Mammary epithelial cell (primary cell): ENCODE measurements at regions of chr3 and their contacts with region 1.

Region 1: GRCh38 chr3:157081681-157082210 is 78.2 kb downstream of the CCNL1 start:
- DNase-seq: peak; percentile 98
- H3K4me3 ChIP-seq: no peak overlapping the region
- H3K27ac ChIP-seq: peak overlapping the region; percentile 97
- H3K4me1 ChIP-seq: peaks cover 41% of the 10 kb centered on the region
- H3K27me3 ChIP-seq: no peaks in the 10 kb centered on the region
- CTCF ChIP-seq: peak; percentile 85 to 99

Region 2: DNA sequence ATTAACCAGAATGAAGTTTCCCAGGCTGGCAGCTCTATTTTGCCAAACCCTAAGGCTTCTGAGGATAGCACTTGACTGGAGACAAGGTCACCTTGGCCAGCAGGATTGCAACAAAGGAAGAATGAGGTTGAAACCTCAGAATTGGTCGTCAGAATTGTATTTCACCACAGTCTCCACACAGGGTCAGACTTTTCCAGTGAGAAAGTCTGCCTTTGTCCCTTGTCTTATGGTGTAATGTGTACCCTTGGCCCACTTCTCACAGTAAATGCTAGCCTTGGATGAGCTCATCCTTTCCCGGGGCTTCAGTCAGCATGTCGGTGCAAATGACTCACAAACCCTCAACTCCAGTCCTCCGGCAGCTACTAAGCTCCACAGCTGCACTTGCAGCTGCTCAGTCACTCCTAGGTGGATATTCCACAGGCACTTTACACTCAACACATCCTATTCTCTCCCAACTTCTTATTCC is 546.6 kb before region 1 on chr3:
- CTCF ChIA-PET with region 1: no interaction called
- dilution Hi-C with region 1: no loop called
- in situ Hi-C with region 1: loop called (anchors 10 to 25 kb)
- intact Hi-C with region 1: loop called (anchors 5 kb)
- DNase-seq: peak; percentile 93
- H3K4me3 ChIP-seq: no peak overlapping the region
- H3K27ac ChIP-seq: peak overlapping the region; percentile 3
- H3K4me1 ChIP-seq: peaks cover 11% of the 10 kb centered on the region
- H3K27me3 ChIP-seq: no peaks in the 10 kb centered on the region
- CTCF ChIP-seq: peak; percentile 10 to 23

Region 3: DNA sequence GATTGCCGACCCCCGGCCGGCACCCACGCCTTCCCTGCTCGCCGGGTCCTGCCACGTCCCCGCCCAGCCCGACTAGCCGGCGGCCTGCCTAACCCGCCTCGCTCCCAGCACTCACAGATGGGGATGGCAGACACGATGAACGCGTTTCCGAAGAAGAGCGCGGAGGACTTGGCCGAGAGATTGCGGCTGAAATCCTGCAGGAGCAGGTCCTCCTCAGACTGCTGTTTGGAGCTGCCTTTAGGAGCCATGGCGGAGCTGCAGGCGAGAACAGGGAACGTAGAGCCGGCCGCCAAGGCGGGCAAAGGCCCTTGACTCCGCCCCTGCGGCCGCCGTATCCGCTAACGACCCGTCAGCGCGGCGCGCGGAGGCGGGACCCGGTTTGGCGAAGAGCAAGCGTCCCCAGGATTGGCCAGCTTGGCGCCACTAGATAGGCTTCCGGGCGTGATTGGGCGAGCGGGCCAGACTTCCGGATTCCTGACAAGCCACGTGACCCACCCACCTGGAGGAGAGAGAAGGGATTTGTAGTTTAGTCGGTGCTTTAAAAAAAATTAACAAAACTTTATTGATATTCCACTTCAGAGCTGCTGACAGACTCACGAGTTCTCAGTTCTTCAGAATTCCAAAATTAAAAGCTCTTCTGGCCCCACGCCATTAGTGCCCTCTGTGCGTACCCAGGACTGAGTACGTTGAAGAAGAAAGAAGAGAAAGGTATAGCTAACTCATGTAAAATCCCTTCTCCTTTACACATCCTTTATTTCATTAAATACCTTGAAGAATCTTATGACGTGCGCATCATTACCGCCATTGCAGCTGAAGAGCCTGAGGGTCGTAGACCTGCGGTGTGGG is 526.7 kb before region 1 on chr3 and contains the start of gene SSR3:
- CTCF ChIA-PET with region 1: no interaction called
- dilution Hi-C with region 1: no loop called
- in situ Hi-C with region 1: no loop called
- intact Hi-C with region 1: loop called (anchors 1 kb)
- DNase-seq: peak; percentile 99
- H3K4me3 ChIP-seq: peak within 1 kb of the TSS; percentile 97 to 99 (median 97)
- H3K27ac ChIP-seq: peak within 1 kb of the TSS; percentile 87
- H3K4me1 ChIP-seq: peaks cover 34% of the 10 kb centered on the region
- H3K27me3 ChIP-seq: no peaks in the 10 kb centered on the region
- CTCF ChIP-seq: peak in 1 of 2 donors; percentile 8
- total RNA-seq, gene SSR3: 375 to 388 TPM

Region 4: GRCh38 chr3:156727519-156728205 is 354.1 kb before region 1 on chr3:
- CTCF ChIA-PET with region 1: no interaction called
- dilution Hi-C with region 1: no loop called
- in situ Hi-C with region 1: no loop called
- intact Hi-C with region 1: loop called (anchors 5 kb)
- DNase-seq: no peak
- H3K4me3 ChIP-seq: no peak overlapping the region
- H3K27ac ChIP-seq: peak overlapping the region; percentile 54
- H3K4me1 ChIP-seq: peaks cover 39% of the 10 kb centered on the region
- H3K27me3 ChIP-seq: no peaks in the 10 kb centered on the region
- CTCF ChIP-seq: no peak

Region 5: GRCh38 chr3:156787926-156788663 is 293.7 kb before region 1 on chr3:
- CTCF ChIA-PET with region 1: no interaction called
- dilution Hi-C with region 1: no loop called
- in situ Hi-C with region 1: no loop called
- intact Hi-C with region 1: loop called (anchors 1 kb)
- DNase-seq: peak; percentile 97
- H3K4me3 ChIP-seq: no peak overlapping the region
- H3K27ac ChIP-seq: peak overlapping the region; percentile 99
- H3K4me1 ChIP-seq: peaks cover 60% of the 10 kb centered on the region
- H3K27me3 ChIP-seq: no peaks in the 10 kb centered on the region
- CTCF ChIP-seq: peak in 1 of 2 donors; percentile 6

Region 6: GRCh38 chr3:156892701-156893100 is 189.0 kb before region 1 on chr3:
- CTCF ChIA-PET with region 1: no interaction called
- dilution Hi-C with region 1: no loop called
- in situ Hi-C with region 1: no loop called
- intact Hi-C with region 1: loop called (anchors 1 kb)
- DNase-seq: peak; percentile 93
- H3K4me3 ChIP-seq: no peak overlapping the region
- H3K27ac ChIP-seq: no peak overlapping the region
- H3K4me1 ChIP-seq: peaks cover 11% of the 10 kb centered on the region
- H3K27me3 ChIP-seq: no peaks in the 10 kb centered on the region
- CTCF ChIP-seq: no peak

Region 7: GRCh38 chr3:157045238-157045850 is 36.4 kb before region 1 on chr3:
- CTCF ChIA-PET with region 1: no interaction called
- dilution Hi-C with region 1: no loop called
- in situ Hi-C with region 1: no loop called
- intact Hi-C with region 1: no loop called
- DNase-seq: no peak
- H3K4me3 ChIP-seq: no peak overlapping the region
- H3K27ac ChIP-seq: no peak overlapping the region
- H3K4me1 ChIP-seq: no peaks in the 10 kb centered on the region
- H3K27me3 ChIP-seq: no peaks in the 10 kb centered on the region
- CTCF ChIP-seq: no peak

Region 8: DNA sequence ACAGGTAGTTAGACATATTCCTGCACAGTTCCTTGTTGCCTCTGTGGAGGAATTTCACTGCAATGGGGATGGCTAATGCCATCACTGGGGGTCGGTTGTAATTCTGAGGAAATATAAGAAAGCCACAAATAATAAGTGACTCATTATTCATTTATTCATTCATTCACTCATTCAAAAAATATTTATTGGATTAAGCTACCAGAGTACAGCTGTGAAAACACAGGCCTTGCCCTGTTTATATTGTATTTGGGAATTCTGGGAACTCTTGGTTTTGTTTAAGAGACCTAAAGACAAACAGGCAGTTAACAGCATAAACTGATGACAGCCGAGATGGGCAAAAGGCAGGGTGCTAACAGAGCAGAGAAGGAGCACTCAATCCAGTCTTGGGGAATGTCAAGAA is 378.5 kb after region 1 on chr3:
- CTCF ChIA-PET with region 1: no interaction called
- dilution Hi-C with region 1: no loop called
- in situ Hi-C with region 1: no loop called
- intact Hi-C with region 1: no loop called
- DNase-seq: peak; percentile 9
- H3K4me3 ChIP-seq: no peak overlapping the region
- H3K27ac ChIP-seq: no peak overlapping the region
- H3K4me1 ChIP-seq: no peaks in the 10 kb centered on the region
- H3K27me3 ChIP-seq: no peaks in the 10 kb centered on the region
- CTCF ChIP-seq: no peak

Region 9: DNA sequence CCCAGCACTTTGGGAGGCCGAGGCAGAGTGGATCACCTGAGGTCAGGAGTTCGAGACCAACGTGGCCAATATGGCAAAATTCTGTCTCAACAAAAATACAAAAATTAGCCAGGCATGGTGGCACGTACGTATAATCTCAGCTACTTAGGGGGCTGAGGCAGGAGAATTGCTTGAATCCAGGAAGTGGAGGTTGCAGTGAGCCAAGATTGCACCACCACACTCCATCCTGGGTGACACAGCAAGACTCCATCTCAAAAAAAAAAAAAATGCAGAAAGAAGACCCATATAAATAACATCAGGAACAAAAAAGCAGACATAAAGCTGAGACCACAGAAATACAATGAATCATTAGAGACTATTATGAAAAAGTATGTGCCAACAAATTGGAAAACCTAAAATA is 656.7 kb after region 1 on chr3:
- CTCF ChIA-PET with region 1: no interaction called
- dilution Hi-C with region 1: no loop called
- in situ Hi-C with region 1: no loop called
- intact Hi-C with region 1: no loop called
- DNase-seq: no peak
- H3K4me3 ChIP-seq: no peak overlapping the region
- H3K27ac ChIP-seq: no peak overlapping the region
- H3K4me1 ChIP-seq: no peaks in the 10 kb centered on the region
- H3K27me3 ChIP-seq: no peaks in the 10 kb centered on the region
- CTCF ChIP-seq: no peak